Activated naive CD4-positive, alpha-beta T cell treated with anti-CD3 and anti-CD28 coated beads for 36 hours (primary cell): ENCODE measurements at regions of chr11 and their contacts with region 1.

Region 1: GRCh38 chr11:36478700-36479329 is 31.3 kb downstream of the TRAF6 start:
- DNase-seq: peak; percentile 62
- H3K4me3 Mint-ChIP-seq: no peak overlapping the region
- H3K27ac Mint-ChIP-seq: no peak overlapping the region
- H3K4me1 Mint-ChIP-seq: peaks cover 2% of the 10 kb centered on the region
- H3K27me3 Mint-ChIP-seq: no peaks in the 10 kb centered on the region

Region 2: DNA sequence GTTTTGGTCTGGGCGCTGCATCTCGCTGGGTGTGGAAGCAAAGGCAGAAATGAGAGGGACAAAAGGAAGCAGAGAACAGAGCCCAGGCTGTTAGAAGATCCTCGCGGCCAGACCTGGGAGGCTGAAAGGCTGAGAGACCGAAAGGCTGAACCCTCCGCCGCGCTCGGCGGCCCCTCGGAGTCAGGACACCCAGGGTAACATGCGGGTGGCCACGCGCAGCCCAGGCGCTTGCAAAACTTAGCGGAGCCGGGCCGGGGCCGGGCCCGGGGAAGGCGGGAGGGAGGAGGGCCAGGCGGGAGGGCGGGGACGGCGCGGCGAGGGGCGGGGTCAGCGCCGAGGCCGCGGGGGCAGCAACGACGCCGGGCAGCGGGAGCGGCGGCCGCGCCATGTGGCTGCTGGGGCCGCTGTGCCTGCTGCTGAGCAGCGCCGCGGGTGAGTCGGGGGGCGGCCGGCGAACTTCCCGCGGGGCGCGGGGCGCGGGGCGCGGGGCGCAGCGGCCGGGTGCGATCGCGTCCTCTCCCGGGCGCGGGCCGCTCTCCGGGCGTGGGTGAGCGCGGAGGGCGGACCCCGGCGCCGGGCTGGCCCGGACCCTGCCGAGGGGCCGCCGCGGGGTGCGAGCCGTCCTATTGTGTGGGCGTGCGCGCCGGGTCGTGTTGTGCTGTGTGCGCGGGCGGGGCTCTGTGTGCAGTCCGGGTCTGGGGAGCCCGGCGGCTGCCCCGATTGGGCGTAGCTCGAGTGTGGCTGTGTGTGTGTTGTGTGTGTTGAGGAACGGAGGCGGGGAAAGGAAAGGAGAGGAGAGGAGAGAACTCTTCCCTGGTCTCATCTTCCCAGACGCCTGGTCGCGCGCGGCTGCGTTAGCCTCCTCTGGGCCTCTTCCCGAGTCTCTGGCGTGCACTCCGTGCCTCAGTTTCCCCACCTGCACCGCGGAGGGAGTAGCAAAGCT is 534.8 kb before region 1 on chr11 and contains the start of gene LDLRAD3:
- CTCF ChIA-PET with region 1: no interaction called
- intact Hi-C with region 1: no loop called
- DNase-seq: peak; percentile 31
- H3K4me3 Mint-ChIP-seq: peak within 1 kb of the TSS; percentile 74
- H3K27ac Mint-ChIP-seq: no peak within 1 kb of the TSS
- H3K4me1 Mint-ChIP-seq: peaks cover 9% of the 10 kb centered on the region
- H3K27me3 Mint-ChIP-seq: peaks cover 41% of the 10 kb centered on the region
- total RNA-seq, gene LDLRAD3: 0.17 to 0.22 TPM

Region 3: DNA sequence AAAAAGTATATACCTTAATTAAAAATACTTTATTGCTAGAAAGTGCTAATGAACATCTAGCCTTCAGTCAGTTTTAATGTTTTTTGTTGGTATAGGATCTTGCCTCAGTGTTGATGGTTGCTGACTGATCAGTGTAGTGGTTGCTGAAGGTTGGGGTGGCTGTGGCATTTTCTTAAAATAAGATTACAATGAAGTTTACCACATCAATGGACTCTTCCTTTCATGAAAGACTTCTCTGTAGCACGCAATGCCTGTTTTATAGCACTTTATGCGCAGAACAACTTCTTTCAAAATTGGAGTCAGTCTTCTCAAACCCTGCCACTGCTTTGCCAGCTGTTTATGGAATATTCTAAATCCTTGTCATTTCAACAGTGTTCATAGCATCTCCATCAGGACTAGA is 484.4 kb before region 1 on chr11:
- CTCF ChIA-PET with region 1: no interaction called
- intact Hi-C with region 1: no loop called
- DNase-seq: no peak
- H3K4me3 Mint-ChIP-seq: no peak overlapping the region
- H3K27ac Mint-ChIP-seq: no peak overlapping the region
- H3K4me1 Mint-ChIP-seq: no peaks in the 10 kb centered on the region
- H3K27me3 Mint-ChIP-seq: peaks cover 17% of the 10 kb centered on the region

Region 4: DNA sequence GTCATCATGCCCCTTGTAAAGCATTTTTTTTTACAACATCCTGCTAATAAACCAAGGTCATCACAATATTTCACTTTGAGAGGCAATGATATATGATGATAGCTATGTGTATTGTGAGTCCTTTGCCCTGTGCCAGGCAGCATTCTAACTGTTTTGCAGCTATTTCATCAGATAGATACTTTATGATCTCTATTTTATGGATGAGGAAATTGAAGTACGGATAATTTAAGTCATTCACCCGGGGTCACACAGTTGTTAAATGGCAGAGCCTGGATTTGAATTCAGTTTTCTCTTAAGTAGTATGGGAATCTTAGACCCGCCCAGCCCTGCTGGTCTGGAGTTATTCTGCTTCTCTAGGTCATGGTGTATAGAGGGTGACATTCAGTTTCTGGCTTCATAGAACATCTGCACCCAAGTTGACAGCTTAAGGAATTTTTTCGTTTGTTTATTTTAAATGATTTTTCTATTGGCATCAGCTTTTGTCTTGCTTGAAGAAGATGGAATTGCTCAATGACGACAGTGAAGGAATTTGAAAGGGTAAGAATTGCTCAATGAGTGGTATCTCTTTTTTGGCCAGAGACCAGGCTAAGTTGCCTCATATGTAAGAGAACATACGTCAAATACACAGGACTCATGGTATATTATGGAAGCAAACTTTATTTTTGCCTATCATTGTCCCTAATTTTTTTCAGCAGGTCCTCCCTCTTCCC is 181.8 kb before region 1 on chr11:
- CTCF ChIA-PET with region 1: interaction called, 109 read pairs
- intact Hi-C with region 1: loop called (anchors 1 kb)
- DNase-seq: no peak
- H3K4me3 Mint-ChIP-seq: no peak overlapping the region
- H3K27ac Mint-ChIP-seq: no peak overlapping the region
- H3K4me1 Mint-ChIP-seq: peaks cover 3% of the 10 kb centered on the region
- H3K27me3 Mint-ChIP-seq: no peaks in the 10 kb centered on the region

Region 5: DNA sequence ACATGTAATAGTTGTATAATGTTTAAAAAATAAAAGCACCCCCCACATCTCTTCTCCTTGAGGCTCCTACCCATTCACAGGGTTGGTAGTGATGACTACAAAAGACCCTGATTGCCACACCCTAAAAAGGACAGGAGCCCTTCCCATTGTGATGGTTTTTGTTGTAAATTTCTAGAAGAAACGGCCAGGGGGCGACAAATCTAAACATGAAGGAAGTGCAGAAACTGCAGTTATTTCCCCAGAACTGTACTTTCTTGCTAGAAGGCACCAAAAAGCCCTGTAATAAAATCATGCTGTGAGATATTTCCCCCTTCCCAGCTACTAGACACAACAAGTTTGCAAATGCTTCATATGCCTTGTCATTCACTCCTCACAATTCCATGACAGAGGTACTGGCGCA is 171.9 kb before region 1 on chr11:
- CTCF ChIA-PET with region 1: interaction called, 5 read pairs
- intact Hi-C with region 1: loop called (anchors 1 kb)
- DNase-seq: peak; percentile 46
- H3K4me3 Mint-ChIP-seq: no peak overlapping the region
- H3K27ac Mint-ChIP-seq: no peak overlapping the region
- H3K4me1 Mint-ChIP-seq: no peaks in the 10 kb centered on the region
- H3K27me3 Mint-ChIP-seq: peaks cover 18% of the 10 kb centered on the region

Region 6: DNA sequence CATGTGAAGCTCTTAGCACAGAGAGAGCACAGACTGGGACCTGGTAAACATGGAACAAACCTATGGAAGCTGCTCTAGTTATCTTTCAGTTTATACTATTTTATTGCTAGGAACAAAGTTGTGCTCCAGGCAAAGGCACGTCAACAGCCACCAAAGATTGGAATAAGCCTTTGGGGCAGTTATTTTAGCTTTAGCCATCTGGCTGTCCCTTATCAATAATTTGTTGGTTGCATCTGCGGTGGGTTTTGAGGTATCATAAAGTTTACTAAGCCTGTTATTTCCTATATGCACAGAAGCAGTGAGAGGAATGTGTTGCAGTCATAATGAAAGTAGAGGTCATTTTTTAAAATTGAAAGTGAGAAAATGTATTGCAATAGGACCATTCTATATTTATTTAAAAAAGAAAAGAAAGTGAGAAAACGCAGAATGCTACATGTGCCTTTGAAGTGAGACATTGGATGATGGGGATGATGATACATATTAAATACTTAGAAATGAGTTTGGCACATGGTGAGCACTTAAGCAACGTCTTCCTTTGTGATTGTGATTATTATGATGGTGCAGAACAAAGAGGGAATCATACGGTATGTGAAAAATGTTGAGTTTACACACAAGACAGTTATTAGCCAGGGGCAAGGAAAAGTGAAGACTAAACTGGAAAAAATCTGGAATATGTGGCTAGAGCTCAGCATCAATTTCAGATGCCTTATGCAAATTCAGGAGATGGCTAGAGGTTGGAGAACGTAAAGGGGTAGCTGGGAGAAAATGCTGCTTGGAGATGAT is 124.4 kb before region 1 on chr11:
- CTCF ChIA-PET with region 1: interaction called, 15 read pairs
- intact Hi-C with region 1: loop called (anchors 1 kb)
- DNase-seq: no peak
- H3K4me3 Mint-ChIP-seq: no peak overlapping the region
- H3K27ac Mint-ChIP-seq: peak overlapping the region; percentile 16
- H3K4me1 Mint-ChIP-seq: peaks cover 49% of the 10 kb centered on the region
- H3K27me3 Mint-ChIP-seq: peaks cover 18% of the 10 kb centered on the region

Region 7: DNA sequence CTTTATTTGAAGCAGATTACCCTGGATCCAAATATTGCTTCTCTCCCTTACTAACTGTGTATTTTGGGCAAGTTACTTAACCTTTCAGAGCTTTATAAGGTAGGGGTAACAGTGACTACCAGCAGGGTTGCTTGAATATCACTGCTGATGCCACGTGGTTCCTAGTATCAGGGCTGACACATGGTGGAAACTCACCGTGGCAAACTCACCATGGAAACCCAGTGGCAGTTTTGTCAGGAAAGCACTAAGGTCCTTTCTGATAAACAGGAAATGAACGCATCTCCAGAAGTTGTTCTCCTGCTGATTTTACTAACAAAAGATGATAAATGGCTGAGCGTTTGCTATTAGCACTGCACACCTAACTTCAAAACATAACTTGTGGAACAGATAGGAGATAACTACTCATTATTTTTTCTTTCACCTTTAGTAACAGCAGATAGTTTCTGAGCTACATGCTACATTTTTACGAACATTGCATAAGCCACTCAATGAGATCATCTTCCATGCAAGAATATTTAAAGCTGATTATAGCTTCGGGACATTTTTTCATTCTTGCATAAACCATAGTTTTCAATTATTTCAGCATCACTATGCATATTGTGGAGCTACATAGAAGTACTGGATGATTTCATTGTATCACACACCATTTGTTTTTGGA is 178.9 kb after region 1 on chr11:
- CTCF ChIA-PET with region 1: no interaction called
- intact Hi-C with region 1: no loop called
- DNase-seq: peak; percentile 5
- H3K4me3 Mint-ChIP-seq: no peak overlapping the region
- H3K27ac Mint-ChIP-seq: no peak overlapping the region
- H3K4me1 Mint-ChIP-seq: no peaks in the 10 kb centered on the region
- H3K27me3 Mint-ChIP-seq: peaks cover 4% of the 10 kb centered on the region

Region 8: GRCh38 chr11:36865846-36866245 is 387.0 kb after region 1 on chr11:
- CTCF ChIA-PET with region 1: no interaction called
- intact Hi-C with region 1: no loop called
- DNase-seq: no peak
- H3K4me3 Mint-ChIP-seq: no peak overlapping the region
- H3K27ac Mint-ChIP-seq: no peak overlapping the region
- H3K4me1 Mint-ChIP-seq: no peaks in the 10 kb centered on the region
- H3K27me3 Mint-ChIP-seq: peaks cover 2% of the 10 kb centered on the region